ENCODE measurements at regions of chr12 and their contacts with region 1.

Region 1: DNA sequence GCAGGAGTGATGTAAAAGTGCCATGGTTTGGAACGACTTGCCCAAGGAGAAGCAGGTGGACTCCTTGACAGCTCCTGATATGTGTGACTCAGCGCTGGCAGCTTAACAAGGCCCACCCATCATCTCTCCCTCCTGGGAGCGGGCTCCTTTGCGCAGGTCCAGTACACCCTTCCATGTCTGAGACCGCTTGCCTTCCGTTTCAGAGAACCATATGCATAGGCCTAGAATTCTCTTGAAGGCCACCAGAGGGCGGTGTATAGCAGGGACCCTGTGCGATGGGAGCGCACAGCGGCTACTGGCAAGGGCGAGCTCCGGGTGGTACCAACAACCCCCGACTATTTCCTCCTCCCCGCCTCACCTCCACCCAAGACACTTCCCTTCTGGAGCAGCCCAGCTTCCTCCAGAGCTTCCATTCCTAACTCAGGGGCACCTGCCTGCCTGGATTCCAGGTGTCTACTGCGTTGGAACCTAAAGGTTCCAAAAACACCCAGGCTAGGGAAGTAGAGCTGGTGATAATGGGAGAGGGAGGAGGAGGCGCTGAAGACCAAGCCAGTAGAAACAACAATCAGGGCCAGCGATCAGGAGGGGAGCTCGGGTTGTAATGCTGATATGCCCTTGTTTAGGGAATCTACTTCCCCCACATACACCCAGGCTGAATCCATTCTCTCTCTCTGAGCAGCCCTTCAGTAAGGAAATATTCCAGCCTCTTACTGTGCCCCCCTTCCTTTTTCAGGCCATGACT is 6.2 kb downstream of the DHH start:
- DNase-seq: peak; percentile 73 to 83 (median 81)
- ATAC-seq: peak; percentile 82 to 93 (median 92)
- H3K4me3 ChIP-seq: peak overlapping the region in 6 of 12 donors; percentile 6 to 38 (median 20)
- H3K27ac ChIP-seq: no peak overlapping the region
- H3K4me1 ChIP-seq: peaks cover 10 to 55% (median 41%) of the 10 kb centered on the region in 12 donors
- H3K27me3 ChIP-seq: peaks cover 0 to 49% (median 29%) of the 10 kb centered on the region in 9 donors
- CTCF ChIP-seq: peak; percentile 84 to 94 (median 90)
- POLR2A ChIP-seq: no peak

Region 2: DNA sequence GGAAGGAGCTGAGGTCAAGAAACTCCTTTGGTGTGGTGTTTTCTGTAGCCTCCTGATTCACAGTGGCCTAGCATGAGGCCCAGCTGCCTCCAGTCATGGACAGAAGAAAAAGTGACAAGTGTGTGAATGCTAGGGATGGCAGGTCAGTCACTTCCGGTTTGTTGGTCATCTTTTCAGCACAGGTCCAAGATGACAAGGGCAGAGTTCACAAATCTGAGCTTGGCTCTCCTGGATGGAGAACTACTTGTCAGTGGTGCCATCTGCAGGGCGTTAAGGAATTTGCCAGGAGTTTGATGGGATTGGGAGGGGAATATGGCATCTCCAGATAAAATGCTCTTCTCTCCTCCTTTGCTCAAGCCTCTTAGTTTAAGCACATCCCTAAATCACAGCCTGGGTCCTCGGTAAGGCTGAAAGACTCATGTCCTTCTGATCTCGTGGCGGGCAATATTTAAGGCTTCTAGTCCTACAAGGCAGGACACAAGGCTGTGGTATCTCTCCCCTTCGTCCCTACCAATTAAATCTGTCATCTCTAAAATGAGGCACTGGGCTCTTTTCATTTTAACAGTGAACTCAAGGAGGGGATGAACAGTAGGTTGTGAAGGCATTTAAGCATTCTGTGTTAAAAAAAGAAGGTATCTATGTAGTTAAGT is 32.8 kb after region 1 on chr12:
- intact Hi-C with region 1: loop called (anchors 1 to 5 kb)
- DNase-seq: peak in 4 of 5 donors; percentile 27 to 54 (median 42)
- ATAC-seq: peak in 3 of 4 donors; percentile 77 to 83 (median 78)
- H3K4me3 ChIP-seq: no peak overlapping the region
- H3K27ac ChIP-seq: no peak overlapping the region
- H3K4me1 ChIP-seq: no peaks in the 10 kb centered on the region
- H3K27me3 ChIP-seq: no peaks in the 10 kb centered on the region
- CTCF ChIP-seq: peak; percentile 46 to 70 (median 63)
- POLR2A ChIP-seq: no peak

Measured in heart left ventricle (tissue), 16 donors.